GM10248 (cell line): ENCODE measurements at regions of chr3 and their contacts with region 1.

Region 1: GRCh38 chr3:42640771-42641370 is 12.6 kb upstream of the ZBTB47 start:
- DNase-seq: no peak
- CTCF ChIP-seq: no peak

Region 2: DNA sequence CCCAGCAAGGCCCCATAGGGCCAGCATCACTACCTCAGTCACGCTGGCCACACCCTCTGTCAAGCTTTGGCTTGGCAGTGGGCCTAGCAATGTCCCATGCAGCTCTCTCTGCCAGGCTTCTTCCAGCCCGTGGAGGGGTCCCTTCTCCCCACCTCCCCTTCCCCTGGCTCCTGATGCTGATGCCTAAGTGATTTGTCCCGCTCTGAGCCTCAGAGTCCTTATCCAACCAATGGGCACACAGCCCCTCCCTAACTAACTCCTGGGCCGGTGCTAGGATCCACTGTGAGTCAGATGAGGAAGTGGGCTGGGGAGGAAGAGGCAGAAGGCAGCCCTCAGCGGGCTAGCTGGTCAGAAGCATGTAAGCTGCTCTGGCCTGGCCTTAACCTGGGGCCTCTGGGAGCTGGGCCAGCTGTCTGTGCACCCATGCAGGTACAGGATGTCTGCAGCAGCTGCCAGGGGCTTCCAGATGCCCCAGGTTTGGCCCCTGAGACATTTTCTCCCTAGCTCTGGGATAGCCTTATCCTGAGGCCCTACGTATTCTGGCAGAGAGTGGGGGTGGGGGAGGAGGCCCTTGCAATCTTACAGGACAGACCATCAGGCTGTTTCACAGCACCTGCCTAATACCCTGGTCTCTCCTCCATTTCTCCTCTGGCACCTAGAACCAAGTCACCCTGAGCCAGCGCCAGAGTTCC is 11.9 kb after region 1 on chr3:
- CTCF ChIA-PET with region 1: interaction called, 19 read pairs
- POLR2A ChIA-PET with region 1: no interaction called
- DNase-seq: peak; percentile 43
- CTCF ChIP-seq: no peak